ENCODE measurements at regions of chr4 and their contacts with region 1.

Region 1: DNA sequence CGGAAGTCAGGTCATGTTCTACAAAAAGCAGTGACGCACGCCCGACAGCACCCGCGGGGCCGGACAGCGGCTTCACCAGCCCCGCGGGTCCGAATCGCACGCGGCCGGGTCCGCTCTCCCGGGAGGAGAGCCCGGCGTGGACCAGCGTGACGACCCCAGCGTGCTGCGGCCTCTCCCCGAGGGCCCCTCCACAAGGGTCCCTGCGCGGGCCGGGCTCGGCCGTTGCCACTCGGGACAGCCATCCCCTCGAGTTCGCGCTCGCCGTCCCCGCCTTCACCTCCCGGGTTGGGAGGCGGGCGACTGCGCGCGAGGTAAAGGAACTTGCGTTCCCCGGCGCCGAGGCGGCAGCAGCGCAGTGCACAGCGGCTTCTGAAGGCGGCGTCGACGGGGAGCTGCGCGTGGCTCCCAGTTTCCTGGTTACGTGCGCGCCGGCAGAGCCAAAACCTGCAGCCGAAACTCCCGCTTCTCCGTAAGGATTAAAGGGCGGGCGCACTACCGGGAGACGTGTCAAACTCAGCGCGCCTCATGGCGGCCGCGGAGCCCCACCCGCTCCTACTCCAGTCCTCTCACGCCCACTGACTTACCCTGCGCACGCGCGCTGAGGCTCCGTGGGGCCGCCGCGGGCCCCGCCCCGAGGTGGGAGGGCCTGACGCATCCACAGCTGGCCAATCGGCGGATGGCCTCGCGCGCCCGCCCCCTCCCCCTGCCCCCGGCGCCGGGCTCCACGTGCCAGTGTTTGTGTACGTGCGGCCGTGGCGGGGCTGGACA is 416 bp upstream of the LRP2BP start:
- DNase-seq: peak; percentile 99
- H3K4me3 ChIP-seq: peak overlapping the region; percentile 54 to 90 (median 87)
- H3K27ac ChIP-seq: peak overlapping the region; percentile 96
- H3K4me1 ChIP-seq: peaks cover 37% of the 10 kb centered on the region
- H3K27me3 ChIP-seq: no peaks in the 10 kb centered on the region
- CTCF ChIP-seq: no peak
- POLR2A ChIP-seq: peak; percentile 59

Region 2: GRCh38 chr4:185209031-185209851 is 186.9 kb before region 1 on chr4 and contains the start of gene SNX25:
- CTCF ChIA-PET with region 1: interaction called, 6 read pairs
- POLR2A ChIA-PET with region 1: no interaction called
- dilution Hi-C with region 1: no loop called
- intact Hi-C with region 1: loop called (anchors 1 kb)
- DNase-seq: peak; percentile 82
- H3K4me3 ChIP-seq: peak within 1 kb of the TSS; percentile 67 to 90 (median 88)
- H3K27ac ChIP-seq: peak within 1 kb of the TSS; percentile 51
- H3K4me1 ChIP-seq: peaks cover 31% of the 10 kb centered on the region
- H3K27me3 ChIP-seq: no peaks in the 10 kb centered on the region
- CTCF ChIP-seq: no peak
- POLR2A ChIP-seq: peak; percentile 56
- total RNA-seq, gene SNX25: 16.1 and 20.2 TPM in 2 replicates

Region 3: GRCh38 chr4:185318679-185319078 is 77.5 kb before region 1 on chr4:
- CTCF ChIA-PET with region 1: no interaction called
- POLR2A ChIA-PET with region 1: no interaction called
- dilution Hi-C with region 1: no loop called
- intact Hi-C with region 1: loop called (anchors 1 kb)
- DNase-seq: peak; percentile 62
- H3K4me3 ChIP-seq: no peak overlapping the region
- H3K27ac ChIP-seq: peak overlapping the region; percentile 35
- H3K4me1 ChIP-seq: peaks cover 10% of the 10 kb centered on the region
- H3K27me3 ChIP-seq: no peaks in the 10 kb centered on the region
- CTCF ChIP-seq: no peak
- POLR2A ChIP-seq: no peak

Region 4: GRCh38 chr4:185332575-185333464 is 63.3 kb before region 1 on chr4:
- CTCF ChIA-PET with region 1: no interaction called
- POLR2A ChIA-PET with region 1: no interaction called
- dilution Hi-C with region 1: no loop called
- intact Hi-C with region 1: no loop called
- DNase-seq: no peak
- H3K4me3 ChIP-seq: no peak overlapping the region
- H3K27ac ChIP-seq: no peak overlapping the region
- H3K4me1 ChIP-seq: no peaks in the 10 kb centered on the region
- H3K27me3 ChIP-seq: no peaks in the 10 kb centered on the region
- CTCF ChIP-seq: no peak
- POLR2A ChIP-seq: no peak

Region 5: DNA sequence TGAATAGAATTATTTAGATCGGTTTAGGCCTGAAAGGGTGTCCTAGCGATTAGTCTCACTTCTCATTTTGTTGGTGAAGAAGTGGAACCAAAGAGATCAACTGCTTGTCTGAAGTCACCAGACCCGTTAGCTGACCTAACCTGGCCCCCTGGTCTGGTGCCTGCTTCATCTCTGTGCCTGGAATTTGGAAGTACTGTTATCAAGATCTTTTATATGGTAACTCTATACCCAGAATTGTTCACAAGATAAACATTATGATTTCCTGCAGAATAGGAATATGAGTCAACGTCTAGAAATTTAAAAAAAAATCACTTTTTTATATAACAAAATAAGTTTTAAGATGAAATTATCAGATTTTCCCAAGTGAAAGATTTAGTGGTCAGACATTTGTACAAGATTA is 37.6 kb before region 1 on chr4:
- CTCF ChIA-PET with region 1: no interaction called
- POLR2A ChIA-PET with region 1: no interaction called
- dilution Hi-C with region 1: no loop called
- intact Hi-C with region 1: loop called (anchors 1 kb)
- DNase-seq: peak; percentile 92
- H3K4me3 ChIP-seq: no peak overlapping the region
- H3K27ac ChIP-seq: peak overlapping the region; percentile 100
- H3K4me1 ChIP-seq: peaks cover 31% of the 10 kb centered on the region
- H3K27me3 ChIP-seq: no peaks in the 10 kb centered on the region
- CTCF ChIP-seq: no peak
- POLR2A ChIP-seq: no peak

Region 6: GRCh38 chr4:185412412-185412811 is 16.3 kb after region 1 on chr4:
- CTCF ChIA-PET with region 1: interaction called, 9 read pairs
- POLR2A ChIA-PET with region 1: no interaction called
- dilution Hi-C with region 1: no loop called
- intact Hi-C with region 1: loop called (anchors 1 kb)
- DNase-seq: peak; percentile 88
- H3K4me3 ChIP-seq: no peak overlapping the region
- H3K27ac ChIP-seq: peak overlapping the region; percentile 87
- H3K4me1 ChIP-seq: peaks cover 21% of the 10 kb centered on the region
- H3K27me3 ChIP-seq: no peaks in the 10 kb centered on the region
- CTCF ChIP-seq: no peak
- POLR2A ChIP-seq: no peak

Region 7: GRCh38 chr4:185471235-185472102 is 75.3 kb after region 1 on chr4 and contains the start of gene CCDC110:
- CTCF ChIA-PET with region 1: no interaction called
- POLR2A ChIA-PET with region 1: no interaction called
- dilution Hi-C with region 1: no loop called
- intact Hi-C with region 1: loop called (anchors 1 kb)
- DNase-seq: peak; percentile 90
- H3K4me3 ChIP-seq: peak within 1 kb of the TSS; percentile 43 to 80 (median 57)
- H3K27ac ChIP-seq: peak within 1 kb of the TSS; percentile 41
- H3K4me1 ChIP-seq: peaks cover 8% of the 10 kb centered on the region
- H3K27me3 ChIP-seq: peaks cover 15% of the 10 kb centered on the region in 2 experiments
- CTCF ChIP-seq: peak; percentile 32 to 57
- POLR2A ChIP-seq: no peak
- total RNA-seq, gene CCDC110: 0.28 and 0.71 TPM in 2 replicates

Region 8: GRCh38 chr4:185682236-185682635 is 286.1 kb after region 1 on chr4:
- CTCF ChIA-PET with region 1: no interaction called
- POLR2A ChIA-PET with region 1: no interaction called
- dilution Hi-C with region 1: no loop called
- intact Hi-C with region 1: no loop called
- DNase-seq: peak; percentile 35
- H3K4me3 ChIP-seq: no peak overlapping the region
- H3K27ac ChIP-seq: peak overlapping the region; percentile 24
- H3K4me1 ChIP-seq: peaks cover 8% of the 10 kb centered on the region
- H3K27me3 ChIP-seq: no peaks in the 10 kb centered on the region
- CTCF ChIP-seq: no peak
- POLR2A ChIP-seq: no peak